Mammary epithelial cell (primary cell): ENCODE measurements at regions of chr20 and their contacts with region 1.

Region 1: GRCh38 chr20:45283548-45284057 is 23.0 kb upstream of the RBPJL start:
- DNase-seq: peak; percentile 62
- H3K4me3 ChIP-seq: no peak overlapping the region
- H3K27ac ChIP-seq: no peak overlapping the region
- H3K4me1 ChIP-seq: peaks cover 9% of the 10 kb centered on the region
- H3K27me3 ChIP-seq: no peaks in the 10 kb centered on the region
- CTCF ChIP-seq: no peak

Region 2: DNA sequence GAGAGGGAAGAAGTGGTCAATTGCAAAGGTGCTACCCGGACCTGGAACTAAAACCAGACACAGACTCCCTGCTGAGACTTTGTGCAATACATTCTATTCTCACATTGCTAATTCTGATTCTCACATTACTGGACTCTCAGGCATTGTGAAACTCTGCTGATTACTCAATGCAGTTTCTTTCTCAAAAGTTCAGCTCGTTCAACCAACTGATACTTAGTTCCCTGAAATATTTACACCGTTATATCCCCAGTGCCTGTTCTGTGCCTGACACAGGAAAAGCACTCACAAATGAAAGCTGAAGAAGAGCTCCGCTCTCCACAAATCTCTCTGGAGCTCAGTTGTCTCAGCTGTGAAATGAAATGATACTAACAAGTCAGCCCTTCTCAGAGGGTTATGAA is 28.7 kb before region 1 on chr20:
- CTCF ChIA-PET with region 1: no interaction called
- dilution Hi-C with region 1: no loop called
- in situ Hi-C with region 1: no loop called
- intact Hi-C with region 1: loop called (anchors 2 kb)
- DNase-seq: peak; percentile 91
- H3K4me3 ChIP-seq: peak overlapping the region in 1 of 3 experiments; percentile 5
- H3K27ac ChIP-seq: peak overlapping the region; percentile 92
- H3K4me1 ChIP-seq: peaks cover 25% of the 10 kb centered on the region
- H3K27me3 ChIP-seq: no peaks in the 10 kb centered on the region
- CTCF ChIP-seq: no peak